ENCODE measurements at regions of chr20 and their contacts with region 1.

Region 1: GRCh38 chr20:46132705-46133120 is 14.6 kb downstream of the CD40 start:
- H3K4me3 Mint-ChIP-seq: no peak overlapping the region
- H3K27ac Mint-ChIP-seq: no peak overlapping the region
- H3K4me1 Mint-ChIP-seq: peaks cover 37% of the 10 kb centered on the region
- H3K27me3 Mint-ChIP-seq: peaks cover 40% of the 10 kb centered on the region

Region 2: GRCh38 chr20:46089417-46090388 is 43.0 kb before region 1 on chr20 and contains the start of gene NCOA5:
- intact Hi-C with region 1: no loop called
- H3K4me3 Mint-ChIP-seq: peak within 1 kb of the TSS; percentile 90
- H3K27ac Mint-ChIP-seq: peak within 1 kb of the TSS; percentile 96
- H3K4me1 Mint-ChIP-seq: peaks cover 38% of the 10 kb centered on the region
- H3K27me3 Mint-ChIP-seq: peaks cover 6% of the 10 kb centered on the region

Region 3: DNA sequence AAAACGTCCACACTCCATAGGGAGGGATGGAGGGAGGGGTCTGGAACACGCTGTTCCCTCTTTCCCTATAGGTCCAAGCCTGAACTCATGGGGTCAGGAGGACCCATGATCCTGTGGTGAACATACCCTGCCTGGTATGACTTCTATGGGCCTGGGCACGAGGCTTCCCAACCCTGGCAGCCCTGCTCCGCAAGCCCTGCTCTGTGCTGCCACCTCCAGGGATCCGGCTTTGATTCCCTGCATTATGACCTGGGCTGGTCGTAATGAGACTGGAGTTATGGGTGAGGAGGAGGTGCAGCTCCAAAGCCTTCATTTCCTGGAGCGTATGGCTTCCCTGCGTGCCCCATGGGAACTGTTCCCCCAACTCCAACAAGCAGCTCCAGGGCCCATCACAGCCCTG is 120.7 kb after region 1 on chr20:
- intact Hi-C with region 1: loop called (anchors 5 kb)
- H3K4me3 Mint-ChIP-seq: no peak overlapping the region
- H3K27ac Mint-ChIP-seq: no peak overlapping the region
- H3K4me1 Mint-ChIP-seq: peaks cover 5% of the 10 kb centered on the region
- H3K27me3 Mint-ChIP-seq: peaks cover 58% of the 10 kb centered on the region

Region 4: DNA sequence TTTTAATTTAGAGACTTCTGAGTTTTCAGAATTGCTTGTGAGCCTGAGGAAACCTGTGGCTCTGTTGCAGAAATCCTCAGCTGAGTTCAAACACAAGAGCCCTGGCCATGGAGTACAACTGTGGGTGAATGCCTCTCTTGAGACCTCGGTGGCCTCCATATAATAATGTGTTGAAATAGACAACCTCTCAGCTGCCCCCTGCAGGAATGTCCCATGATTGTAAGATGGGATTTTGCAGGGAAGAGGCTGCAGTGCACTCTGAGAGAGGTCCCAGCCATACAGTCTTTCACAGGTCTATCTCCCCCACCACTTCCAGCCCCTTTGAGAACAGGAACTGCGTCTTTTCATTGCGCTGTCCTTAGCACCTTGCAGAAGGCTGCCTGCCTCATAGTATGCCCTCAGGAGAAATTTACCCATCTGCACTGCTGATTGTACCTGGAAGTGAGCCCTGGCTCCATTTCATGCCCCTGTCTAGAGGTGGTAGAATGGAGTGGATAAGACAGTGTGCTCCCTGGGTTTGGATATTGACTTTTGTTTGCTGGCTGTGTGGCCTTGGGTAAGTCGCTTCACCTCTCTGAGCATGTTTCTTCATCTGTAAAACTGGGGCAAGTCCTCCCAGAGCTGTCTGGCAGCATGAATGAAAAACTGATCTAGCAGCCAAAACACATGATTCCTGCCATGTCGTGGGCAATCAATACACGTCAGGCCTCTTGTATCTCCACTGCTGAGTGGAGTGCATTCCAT is 192.4 kb after region 1 on chr20:
- intact Hi-C with region 1: loop called (anchors 2 kb)
- H3K4me3 Mint-ChIP-seq: no peak overlapping the region
- H3K27ac Mint-ChIP-seq: no peak overlapping the region
- H3K4me1 Mint-ChIP-seq: no peaks in the 10 kb centered on the region
- H3K27me3 Mint-ChIP-seq: peaks cover 24% of the 10 kb centered on the region

Region 5: DNA sequence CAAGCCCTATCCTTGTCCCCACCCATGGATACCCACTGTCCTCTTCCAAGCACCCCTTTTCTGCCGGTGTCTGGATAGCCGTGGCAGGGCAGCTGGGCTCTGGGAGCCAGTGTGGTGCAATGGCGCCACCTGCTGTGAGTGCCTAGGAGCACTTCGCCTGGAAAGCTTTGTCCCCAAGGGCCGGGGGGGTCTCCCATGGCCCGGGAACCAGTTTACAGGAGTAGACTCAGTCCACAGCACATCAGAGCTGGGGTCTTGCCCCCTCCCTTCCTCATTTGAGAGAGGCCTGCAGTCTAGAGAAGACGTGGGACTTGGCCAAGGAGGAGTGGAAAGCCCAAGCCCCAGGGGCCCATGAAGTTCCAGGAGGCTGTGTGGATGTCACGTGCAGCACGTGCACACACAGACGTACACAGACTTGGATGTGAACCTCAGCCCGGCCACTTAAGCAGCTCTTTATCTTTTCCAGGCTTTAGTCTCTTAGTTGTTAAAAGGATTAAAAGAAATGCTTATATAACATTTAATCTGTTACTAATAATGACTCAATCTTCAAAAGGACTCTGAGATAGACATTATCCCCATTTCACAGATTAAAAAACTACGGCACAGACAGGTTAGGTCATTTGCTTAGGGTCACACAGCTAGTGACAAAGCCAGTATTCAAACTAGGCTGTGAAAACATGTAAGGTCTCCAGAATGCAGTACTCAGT is 216.5 kb after region 1 on chr20:
- intact Hi-C with region 1: loop called (anchors 2 kb)
- H3K4me3 Mint-ChIP-seq: no peak overlapping the region
- H3K27ac Mint-ChIP-seq: no peak overlapping the region
- H3K4me1 Mint-ChIP-seq: peaks cover 54% of the 10 kb centered on the region
- H3K27me3 Mint-ChIP-seq: peaks cover 9% of the 10 kb centered on the region

Region 6: DNA sequence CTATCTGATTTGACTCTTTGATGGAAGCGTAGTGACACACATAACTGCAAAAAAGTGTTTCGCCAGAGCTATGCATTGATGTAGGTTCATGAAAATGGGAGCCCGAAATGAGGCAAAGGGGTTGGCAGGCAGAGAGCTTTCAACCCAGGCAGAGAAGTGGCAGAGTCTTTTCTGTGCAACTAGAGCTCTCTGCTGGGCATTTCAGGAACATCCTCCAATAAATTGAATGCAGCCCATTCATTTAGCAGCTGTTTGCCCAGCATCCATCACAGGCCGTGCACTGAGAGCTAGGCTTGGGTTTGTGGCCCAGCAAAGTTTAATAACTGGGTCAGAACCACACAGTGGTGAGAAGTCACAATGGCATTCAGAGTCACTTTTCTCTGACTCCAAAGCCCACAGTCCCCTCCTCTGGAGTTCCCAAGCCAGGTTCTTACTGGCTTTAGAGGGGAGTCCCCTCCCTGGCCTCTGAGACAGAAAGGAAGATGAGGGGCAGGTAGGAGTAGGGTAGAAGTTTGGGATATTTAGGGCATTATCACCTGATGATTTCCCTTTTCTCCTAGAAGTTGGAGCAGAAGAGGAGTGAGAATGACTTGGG is 305.5 kb after region 1 on chr20:
- intact Hi-C with region 1: loop called (anchors 2 kb)
- H3K4me3 Mint-ChIP-seq: no peak overlapping the region
- H3K27ac Mint-ChIP-seq: no peak overlapping the region
- H3K4me1 Mint-ChIP-seq: no peaks in the 10 kb centered on the region
- H3K27me3 Mint-ChIP-seq: peaks cover 6% of the 10 kb centered on the region

Measured in dendritic cell treated with granulocyte-macrophage colony-stimulating factor and Interleukin-4, amounts not matched to agents 40 ng/mL and 50 ng/mL, for 4 days (primary cell).